ENCODE measurements at regions of chrX and their contacts with region 1.

Region 1: DNA sequence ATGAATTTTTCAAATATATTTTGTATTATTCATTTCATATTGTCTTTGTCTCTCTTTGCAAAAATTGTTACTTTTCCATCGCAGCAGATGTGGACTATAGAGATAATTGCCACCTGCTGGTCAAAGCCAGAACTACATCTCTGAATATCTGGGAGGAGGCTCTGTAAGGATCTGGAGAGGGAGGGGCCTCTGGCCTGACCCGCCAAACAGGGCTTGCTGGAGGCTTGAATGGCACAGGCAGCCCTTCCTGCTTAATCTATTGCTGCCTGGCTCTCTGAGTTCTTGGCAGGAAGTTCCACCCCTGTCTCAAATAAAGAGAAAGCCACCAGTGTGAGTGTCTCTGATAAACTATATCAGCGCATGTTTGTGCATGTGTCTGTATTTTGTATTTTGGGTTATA is 132.4 kb downstream of the ZMAT1 start:
- DNase-seq: peak; percentile 87 to 93
- H3K4me3 ChIP-seq: no peak overlapping the region
- H3K4me1 ChIP-seq: no peaks in the 10 kb centered on the region
- H3K27me3 ChIP-seq: no peaks in the 10 kb centered on the region

Region 2: DNA sequence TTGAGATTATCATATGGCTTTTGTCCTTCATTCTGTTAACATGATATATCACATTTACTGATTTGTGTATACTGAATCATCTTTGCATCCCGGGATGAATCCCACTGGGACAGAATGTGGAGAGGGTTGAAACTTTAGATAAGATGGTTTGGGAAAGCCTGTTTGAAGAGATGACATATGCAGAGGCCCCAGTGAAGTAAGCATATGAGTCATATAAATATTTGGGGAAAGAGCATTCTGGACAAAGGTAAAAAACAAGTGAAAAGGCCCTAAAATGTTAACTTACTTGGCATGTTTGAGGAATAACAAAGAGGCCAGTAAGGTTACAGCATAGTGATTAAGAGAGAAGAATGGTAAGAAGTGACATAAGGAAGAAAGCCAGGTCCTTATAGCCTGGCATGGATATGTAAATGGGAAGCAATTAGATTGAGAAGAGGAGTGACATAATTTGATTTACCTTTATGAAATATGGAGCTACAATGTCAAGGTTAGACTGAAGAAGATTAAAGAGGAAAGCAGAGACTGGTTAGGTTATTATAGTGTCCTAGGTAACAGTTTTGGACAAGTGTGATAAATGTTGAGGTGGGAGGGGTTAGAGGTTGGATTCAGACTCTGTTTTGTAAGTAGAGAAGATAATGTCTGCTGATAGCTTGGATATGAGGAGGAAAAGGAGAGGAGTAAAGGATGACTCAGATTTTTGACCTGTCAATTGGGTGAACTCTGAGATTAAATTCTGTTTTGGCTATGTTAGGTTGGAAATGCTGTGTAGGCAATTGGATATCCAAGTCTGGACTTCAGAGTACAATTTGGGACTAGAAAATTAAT is 634.4 kb before region 1 on chrX:
- in situ Hi-C with region 1: no loop called
- DNase-seq: no peak
- H3K4me3 ChIP-seq: no peak overlapping the region
- H3K4me1 ChIP-seq: no peaks in the 10 kb centered on the region
- H3K27me3 ChIP-seq: no peaks in the 10 kb centered on the region

Region 3: GRCh38 chrX:101415180-101416145 is 383.9 kb before region 1 on chrX:
- in situ Hi-C with region 1: loop called (anchors 10 kb)
- DNase-seq: peak; percentile 52 to 77
- H3K4me3 ChIP-seq: no peak overlapping the region
- H3K4me1 ChIP-seq: no peaks in the 10 kb centered on the region
- H3K27me3 ChIP-seq: no peaks in the 10 kb centered on the region

Region 4: GRCh38 chrX:101595739-101596419 is 203.5 kb before region 1 on chrX:
- in situ Hi-C with region 1: loop called (anchors 10 kb)
- DNase-seq: peak; percentile 54 to 69
- H3K4me3 ChIP-seq: no peak overlapping the region
- H3K4me1 ChIP-seq: no peaks in the 10 kb centered on the region
- H3K27me3 ChIP-seq: peaks cover 8% of the 10 kb centered on the region; the same call in 1 of the 2 replicates

Measured in HAP-1 (cell line).